CD4-positive, alpha-beta T cell (primary cell): ENCODE measurements at regions of chr2 and their contacts with region 1.

Region 1: DNA sequence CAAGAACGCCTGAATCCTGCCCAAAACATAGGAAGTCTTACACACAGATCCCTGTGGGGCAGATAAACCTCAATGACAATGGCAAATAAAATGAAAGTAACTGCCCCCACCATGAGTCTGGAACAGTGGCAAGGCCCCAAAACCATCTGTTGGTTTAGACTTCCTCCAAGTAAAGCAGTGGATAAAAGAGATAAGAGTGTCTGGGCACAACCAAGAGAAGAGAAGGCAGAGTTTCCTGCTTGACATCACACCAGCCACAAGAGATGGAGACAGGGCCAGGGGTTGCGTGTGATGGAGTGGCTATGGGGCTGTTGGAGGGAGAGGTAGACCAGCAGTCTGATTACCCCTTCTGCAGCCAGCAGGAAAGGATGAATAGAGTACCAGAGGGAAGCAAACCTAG is 212.1 kb upstream of the POU3F3 start:
- DNase-seq: no peak
- ATAC-seq: no peak
- H3K4me3 ChIP-seq: no peak overlapping the region
- H3K4me3 Mint-ChIP-seq: no peak overlapping the region
- H3K27ac ChIP-seq: no peak overlapping the region
- H3K27ac Mint-ChIP-seq: no peak overlapping the region
- H3K4me1 ChIP-seq: no peaks in the 10 kb centered on the region
- H3K4me1 Mint-ChIP-seq: no peaks in the 10 kb centered on the region
- H3K27me3 ChIP-seq: no peaks in the 10 kb centered on the region
- H3K27me3 Mint-ChIP-seq: no peaks in the 10 kb centered on the region
- CTCF ChIP-seq: no peak

Region 2: DNA sequence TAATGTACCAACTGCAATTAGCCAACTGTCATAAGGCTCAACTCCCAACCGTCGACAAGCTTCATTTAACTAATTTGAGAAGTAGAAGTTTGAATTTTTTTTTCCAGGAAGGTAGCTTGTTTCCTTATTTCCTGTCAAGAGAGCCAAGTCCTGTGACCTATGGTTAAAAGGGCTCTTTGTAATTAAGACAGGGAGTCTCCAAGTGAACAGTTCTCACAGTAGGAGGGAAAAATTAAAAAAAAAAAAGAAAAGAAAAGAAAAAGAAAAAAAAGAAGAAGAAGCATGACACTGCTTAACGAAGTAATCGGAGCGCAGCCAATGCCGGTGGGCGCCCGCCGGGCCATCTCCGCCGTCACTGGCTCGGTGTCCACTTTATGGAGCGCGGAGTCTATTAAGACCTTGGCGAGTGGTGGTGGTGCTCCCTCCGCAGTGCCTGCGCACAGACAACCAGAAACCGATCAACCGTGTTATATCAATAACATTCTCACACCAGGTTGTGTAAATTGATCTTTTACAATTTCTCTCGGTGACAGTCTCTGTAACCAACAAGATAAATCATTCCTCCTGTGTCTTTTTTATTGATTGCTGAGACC is 14.9 kb after region 1 on chr2:
- CTCF ChIA-PET with region 1: no interaction called
- POLR2A ChIA-PET with region 1: no interaction called
- intact Hi-C with region 1: loop called in 1 of 2 experiments (anchors 1 kb)
- DNase-seq: no peak
- ATAC-seq: no peak
- H3K4me3 ChIP-seq: no peak overlapping the region
- H3K4me3 Mint-ChIP-seq: no peak overlapping the region
- H3K27ac ChIP-seq: no peak overlapping the region
- H3K27ac Mint-ChIP-seq: no peak overlapping the region
- H3K4me1 ChIP-seq: peaks cover 2% of the 10 kb centered on the region
- H3K4me1 Mint-ChIP-seq: peaks cover 9% of the 10 kb centered on the region
- H3K27me3 ChIP-seq: peaks cover 14 to 28% of the 10 kb centered on the region in 2 experiments
- H3K27me3 Mint-ChIP-seq: peaks cover 43% of the 10 kb centered on the region
- CTCF ChIP-seq: no peak

Region 3: DNA sequence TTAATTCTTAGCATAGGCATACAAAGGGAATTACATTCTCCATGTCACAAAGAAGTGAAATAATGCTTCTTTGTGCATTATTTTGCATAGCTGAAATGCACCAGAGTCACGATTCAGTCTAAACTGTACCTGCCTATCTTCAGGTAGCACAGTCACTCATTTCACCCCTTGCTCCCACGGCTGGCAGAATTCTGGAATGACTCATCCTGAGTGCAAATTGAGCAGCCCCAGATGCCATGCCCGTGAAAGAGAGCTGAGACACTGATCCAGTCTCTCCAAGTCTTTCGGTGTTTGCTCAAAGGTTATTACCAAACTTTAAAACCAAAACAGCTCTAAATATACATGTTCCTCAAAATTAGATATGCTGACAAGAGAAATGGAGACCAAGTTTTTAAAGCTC is 43.8 kb after region 1 on chr2:
- CTCF ChIA-PET with region 1: no interaction called
- POLR2A ChIA-PET with region 1: no interaction called
- intact Hi-C with region 1: no loop called
- DNase-seq: no peak
- ATAC-seq: no peak
- H3K4me3 ChIP-seq: no peak overlapping the region
- H3K4me3 Mint-ChIP-seq: no peak overlapping the region
- H3K27ac ChIP-seq: no peak overlapping the region
- H3K27ac Mint-ChIP-seq: no peak overlapping the region
- H3K4me1 ChIP-seq: no peaks in the 10 kb centered on the region
- H3K4me1 Mint-ChIP-seq: no peaks in the 10 kb centered on the region
- H3K27me3 ChIP-seq: no peaks in the 10 kb centered on the region
- H3K27me3 Mint-ChIP-seq: no peaks in the 10 kb centered on the region
- CTCF ChIP-seq: no peak